ENCODE measurements at regions of chr7 and their contacts with region 1.

Region 1: GRCh38 chr7:79298145-79298760 is 155.2 kb downstream of the MAGI2 start:
- DNase-seq: no peak
- ATAC-seq: no peak

Region 2: DNA sequence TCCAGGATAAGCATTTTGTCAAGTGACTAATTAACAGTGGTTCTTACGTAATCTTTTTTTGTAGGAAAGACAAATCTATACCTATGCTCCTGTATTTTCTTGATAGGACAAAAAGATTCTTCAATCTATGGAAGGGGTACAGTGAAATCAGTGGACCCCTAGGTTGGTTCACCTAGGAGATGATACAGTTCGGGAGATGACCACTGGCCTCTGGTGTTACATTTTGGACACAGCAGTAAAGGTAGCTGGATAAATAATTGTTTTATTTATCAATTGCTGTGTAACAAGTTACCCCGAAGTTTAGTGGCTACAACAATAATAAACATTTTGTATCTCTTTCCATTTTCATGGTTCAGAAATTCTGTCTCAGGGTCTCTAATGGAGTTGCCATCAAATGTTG is 443.4 kb after region 1 on chr7:
- intact Hi-C with region 1: loop called in 1 of 2 experiments (anchors 10 kb)
- DNase-seq: no peak
- ATAC-seq: no peak

Region 3: DNA sequence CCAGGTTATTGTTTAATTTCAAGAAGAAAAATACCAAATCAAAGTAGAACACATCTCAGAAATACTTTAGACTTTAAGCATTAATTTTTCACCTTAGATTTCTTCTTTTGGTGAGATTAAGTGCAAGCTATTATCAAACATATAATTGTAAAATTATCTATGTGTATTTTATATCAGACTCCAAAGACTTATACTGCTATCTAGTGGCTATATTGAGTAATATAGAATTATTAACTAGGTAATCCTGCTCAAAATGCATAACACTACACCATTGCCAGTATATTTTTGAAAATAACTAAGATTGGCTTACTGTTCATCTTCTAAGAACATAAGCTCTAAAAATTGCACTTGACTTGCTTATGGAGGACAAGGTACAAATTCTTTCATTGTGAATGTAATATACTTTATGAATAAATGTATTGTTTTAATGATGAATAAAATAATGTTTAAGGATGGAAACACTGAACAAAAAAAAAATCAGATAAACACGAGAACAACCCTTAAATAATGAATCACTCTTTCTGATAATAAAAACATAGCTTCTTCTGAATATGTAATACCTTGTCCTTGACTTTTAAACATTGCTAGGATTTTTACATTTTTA is 749.7 kb after region 1 on chr7:
- intact Hi-C with region 1: loop called in 1 of 2 experiments (anchors 10 kb)
- DNase-seq: no peak
- ATAC-seq: no peak

Measured in left cardiac atrium (tissue), 4 donors.